ENCODE measurements at regions of chr19 and their contacts with region 1.

Region 1: GRCh38 chr19:12126707-12127106 is 13.4 kb downstream of the ZNF20 start:
- DNase-seq: peak; percentile 41
- H3K4me3 ChIP-seq: no peak overlapping the region
- H3K27ac ChIP-seq: no peak overlapping the region
- H3K4me1 ChIP-seq: no peaks in the 10 kb centered on the region
- CTCF ChIP-seq: peak; percentile 83

Region 2: DNA sequence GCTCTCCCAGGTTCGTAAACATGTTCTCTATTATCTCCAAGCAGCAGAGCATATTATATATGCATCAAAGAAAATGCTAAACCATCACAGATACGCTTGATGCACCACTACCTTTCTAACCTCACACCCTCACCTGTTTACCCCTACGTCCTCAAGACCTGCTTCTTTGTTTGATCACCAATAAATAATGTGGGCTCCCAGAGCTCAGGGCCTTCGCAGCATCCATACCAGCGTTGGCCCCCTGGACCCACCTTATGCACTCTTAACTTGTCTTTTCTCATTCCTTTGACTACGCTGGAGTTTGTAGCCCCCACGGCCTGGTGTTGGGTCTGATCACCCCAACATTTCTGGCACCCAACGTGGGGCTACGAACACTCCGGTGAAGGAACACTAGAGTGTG is 324.1 kb after region 1 on chr19:
- CTCF ChIA-PET with region 1: no interaction called
- POLR2A ChIA-PET with region 1: interaction called, 10 read pairs
- intact Hi-C with region 1: no loop called
- DNase-seq: no peak
- H3K4me3 ChIP-seq: no peak overlapping the region
- H3K27ac ChIP-seq: no peak overlapping the region
- H3K4me1 ChIP-seq: no peaks in the 10 kb centered on the region
- CTCF ChIP-seq: no peak